ENCODE measurements at regions of chr4 and their contacts with region 1.

Region 1: DNA sequence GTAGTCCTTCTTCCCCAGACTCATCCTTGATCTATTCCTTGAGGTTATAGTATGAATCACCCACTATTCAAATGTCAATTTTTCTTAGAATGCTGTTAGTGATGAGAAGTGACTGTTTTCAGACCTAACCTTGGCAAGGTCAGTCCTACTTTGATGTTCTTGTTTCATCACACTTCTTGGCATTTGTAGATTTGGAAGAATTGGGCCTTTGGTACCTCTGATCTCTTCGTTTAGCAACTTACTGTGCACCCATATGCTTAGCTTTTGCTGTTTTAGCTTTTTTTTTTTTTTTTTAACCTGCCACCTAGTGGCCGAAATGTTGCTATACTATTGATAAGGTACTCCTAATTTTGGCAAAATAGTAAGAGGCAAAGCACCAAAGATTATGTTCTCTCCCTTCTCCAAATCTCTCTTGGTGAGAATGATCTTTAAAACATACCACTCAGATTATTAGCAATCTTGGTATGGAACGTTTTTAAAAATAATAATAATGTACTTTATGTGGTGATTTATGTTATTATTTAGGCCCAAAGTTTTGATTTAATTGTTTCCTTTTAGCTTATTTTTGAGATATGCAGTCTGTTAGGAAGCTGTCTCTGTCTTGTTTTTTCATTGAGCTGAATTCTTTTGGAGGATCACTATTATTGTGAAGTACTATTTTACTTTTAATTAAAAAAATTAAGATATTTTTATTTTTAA is 16.6 kb downstream of the DCK start:
- DNase-seq: no peak
- H3K4me3 ChIP-seq: no peak overlapping the region
- H3K27ac ChIP-seq: no peak overlapping the region
- H3K4me1 ChIP-seq: peaks cover 0 to 1% (median 0%) of the 10 kb centered on the region in 4 experiments; a peak in 3 of 7 replicates
- H3K27me3 ChIP-seq: no peaks in the 10 kb centered on the region
- CTCF ChIP-seq: peak in 2 of 3 experiments; percentile 21 to 58; a peak in 2 of 4 replicates
- EP300 ChIP-seq: no peak
- POLR2A ChIP-seq: no peak
- RAD21 ChIP-seq: peak; percentile 24 to 42; a peak in 3 of 4 replicates

Region 2: DNA sequence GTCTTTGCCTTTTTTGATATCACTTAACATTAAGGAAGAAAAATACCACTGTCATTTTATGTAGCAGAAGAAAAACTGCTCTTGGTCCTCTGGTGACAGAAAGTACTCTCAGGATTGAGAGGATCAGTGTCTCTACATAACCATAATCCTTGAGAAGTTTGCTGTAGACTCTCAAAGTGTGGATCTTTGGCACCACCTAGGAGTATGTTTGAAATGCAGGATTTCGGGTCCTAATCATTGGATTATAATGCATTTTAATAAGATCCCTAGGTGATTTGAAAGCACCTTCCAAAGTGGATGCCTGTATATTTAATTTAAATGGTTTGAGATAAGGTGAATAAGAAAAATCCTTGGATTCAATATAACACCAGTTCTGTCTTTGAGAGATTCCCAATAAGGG is 84.6 kb before region 1 on chr4:
- CTCF ChIA-PET with region 1: no interaction called
- POLR2A ChIA-PET with region 1: no interaction called
- DNase-seq: no peak
- H3K4me3 ChIP-seq: no peak overlapping the region
- H3K27ac ChIP-seq: no peak overlapping the region
- H3K4me1 ChIP-seq: peaks cover 0 to 10% (median 4%) of the 10 kb centered on the region in 4 experiments; a peak in 3 of 7 replicates
- H3K27me3 ChIP-seq: no peaks in the 10 kb centered on the region
- CTCF ChIP-seq: no peak
- EP300 ChIP-seq: no peak
- POLR2A ChIP-seq: no peak
- RAD21 ChIP-seq: 0 out of 4 replicates have a peak, but pooled peaks of 1 of the 2 experiments have one; percentile 3

Region 3: DNA sequence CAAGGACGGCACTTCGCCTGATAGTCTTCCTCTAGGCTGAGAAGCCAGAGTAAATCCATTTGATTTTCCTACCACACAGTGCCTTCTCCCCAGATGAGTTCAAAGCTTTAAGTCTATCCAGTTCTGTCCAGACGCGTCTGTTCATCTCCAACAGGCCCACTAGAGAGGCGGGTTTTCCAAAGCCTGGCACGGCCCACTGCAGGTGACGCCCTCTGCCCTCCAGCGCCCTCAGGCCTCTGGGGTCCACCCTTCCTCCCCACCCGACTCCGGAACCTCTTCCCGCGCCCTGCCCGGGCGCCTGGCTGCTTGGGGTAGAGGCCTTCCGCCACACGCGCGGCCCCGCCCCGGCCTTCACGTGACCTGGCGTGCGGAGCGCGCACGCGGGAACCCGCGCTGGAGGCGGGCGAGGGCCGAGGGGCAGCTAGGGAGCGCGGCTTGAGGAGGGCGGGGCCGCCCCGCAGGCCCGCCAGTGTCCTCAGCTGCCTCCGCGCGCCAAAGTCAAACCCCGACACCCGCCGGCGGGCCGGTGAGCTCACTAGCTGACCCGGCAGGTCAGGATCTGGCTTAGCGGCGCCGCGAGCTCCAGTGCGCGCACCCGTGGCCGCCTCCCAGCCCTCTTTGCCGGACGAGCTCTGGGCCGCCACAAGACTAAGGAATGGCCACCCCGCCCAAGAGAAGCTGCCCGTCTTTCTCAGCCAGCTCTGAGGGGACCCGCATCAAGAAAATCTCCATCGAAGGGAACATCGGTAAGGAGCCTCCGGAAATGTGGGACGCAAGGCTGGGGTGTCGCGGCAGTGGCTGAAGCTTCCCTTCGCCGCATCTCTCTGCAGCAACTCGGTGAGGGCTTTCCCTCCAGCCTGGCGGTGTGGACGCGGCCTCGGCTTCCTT is 16.6 kb before region 1 on chr4 and contains the start of gene DCK:
- CTCF ChIA-PET with region 1: interaction called, 40 read pairs
- POLR2A ChIA-PET with region 1: interaction called, 22 read pairs
- DNase-seq: peak; percentile 84 to 91
- H3K4me3 ChIP-seq: peak within 1 kb of the TSS; percentile 87 to 95 (median 89)
- H3K27ac ChIP-seq: peak within 1 kb of the TSS; percentile 80
- H3K4me1 ChIP-seq: peaks cover 2 to 9% (median 5%) of the 10 kb centered on the region in 4 experiments; a peak in 4 of 7 replicates
- H3K27me3 ChIP-seq: no peaks in the 10 kb centered on the region
- CTCF ChIP-seq: peak in 1 of 3 experiments; percentile 3; a peak in 1 of 4 replicates
- EP300 ChIP-seq: no peak
- POLR2A ChIP-seq: peak; percentile 82 to 88
- RAD21 ChIP-seq: peak in 1 of 2 experiments; percentile 12; a peak in 1 of 4 replicates
- total RNA-seq, gene DCK: 15.7 and 18.1 TPM in 2 replicates

Region 4: DNA sequence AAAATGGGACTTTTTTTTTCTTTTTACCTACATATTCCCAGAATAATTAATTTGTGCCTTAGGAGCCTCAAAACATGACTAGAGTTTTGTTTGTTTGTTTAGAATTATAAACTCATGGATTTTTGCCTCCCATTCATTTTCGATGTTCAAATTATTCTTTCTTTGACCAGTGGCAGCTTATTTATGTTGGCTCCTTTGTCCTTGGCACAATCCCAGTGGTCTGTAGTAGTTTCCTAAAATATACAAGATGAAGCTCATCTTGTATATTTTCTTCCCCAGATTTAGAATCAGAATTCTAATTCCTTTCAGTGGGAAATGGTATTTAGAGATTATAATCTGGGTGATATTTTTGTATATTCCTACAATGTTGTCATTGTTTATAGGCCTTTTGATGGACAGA is 10.6 kb after region 1 on chr4:
- CTCF ChIA-PET with region 1: interaction called, 14 read pairs
- POLR2A ChIA-PET with region 1: no interaction called
- DNase-seq: no peak
- H3K4me3 ChIP-seq: no peak overlapping the region
- H3K27ac ChIP-seq: no peak overlapping the region
- H3K4me1 ChIP-seq: no peaks in the 10 kb centered on the region
- H3K27me3 ChIP-seq: no peaks in the 10 kb centered on the region
- CTCF ChIP-seq: no peak
- EP300 ChIP-seq: no peak
- POLR2A ChIP-seq: no peak
- RAD21 ChIP-seq: no peak